ENCODE measurements at regions of chr3 and their contacts with region 1.

Region 1: DNA sequence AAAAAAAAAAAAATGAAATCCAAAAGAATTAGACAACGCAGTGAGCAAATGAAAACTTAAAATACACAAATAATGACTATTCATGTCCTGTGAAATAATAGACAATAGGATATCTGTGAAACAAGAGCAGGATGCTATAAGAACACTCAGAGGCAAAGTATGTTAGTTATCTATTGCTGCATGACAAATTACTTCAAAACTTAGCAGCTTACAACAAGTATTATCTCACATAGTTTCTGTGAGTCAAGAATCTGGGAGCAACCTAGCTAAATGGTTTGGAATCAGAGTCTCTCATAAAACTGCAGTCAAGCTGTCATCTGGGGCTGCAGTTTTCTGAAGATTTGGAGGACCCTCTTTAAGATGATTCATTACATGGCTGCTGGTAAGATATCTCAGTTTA is 36.5 kb upstream of the ZMAT3 start:
- DNase-seq: peak; percentile 76
- ATAC-seq: peak; percentile 91
- H3K4me3 ChIP-seq: no peak overlapping the region
- H3K27ac ChIP-seq: peak overlapping the region; percentile 35
- H3K4me1 ChIP-seq: peaks cover 14% of the 10 kb centered on the region
- H3K27me3 ChIP-seq: no peaks in the 10 kb centered on the region
- CTCF ChIP-seq: no peak

Region 2: DNA sequence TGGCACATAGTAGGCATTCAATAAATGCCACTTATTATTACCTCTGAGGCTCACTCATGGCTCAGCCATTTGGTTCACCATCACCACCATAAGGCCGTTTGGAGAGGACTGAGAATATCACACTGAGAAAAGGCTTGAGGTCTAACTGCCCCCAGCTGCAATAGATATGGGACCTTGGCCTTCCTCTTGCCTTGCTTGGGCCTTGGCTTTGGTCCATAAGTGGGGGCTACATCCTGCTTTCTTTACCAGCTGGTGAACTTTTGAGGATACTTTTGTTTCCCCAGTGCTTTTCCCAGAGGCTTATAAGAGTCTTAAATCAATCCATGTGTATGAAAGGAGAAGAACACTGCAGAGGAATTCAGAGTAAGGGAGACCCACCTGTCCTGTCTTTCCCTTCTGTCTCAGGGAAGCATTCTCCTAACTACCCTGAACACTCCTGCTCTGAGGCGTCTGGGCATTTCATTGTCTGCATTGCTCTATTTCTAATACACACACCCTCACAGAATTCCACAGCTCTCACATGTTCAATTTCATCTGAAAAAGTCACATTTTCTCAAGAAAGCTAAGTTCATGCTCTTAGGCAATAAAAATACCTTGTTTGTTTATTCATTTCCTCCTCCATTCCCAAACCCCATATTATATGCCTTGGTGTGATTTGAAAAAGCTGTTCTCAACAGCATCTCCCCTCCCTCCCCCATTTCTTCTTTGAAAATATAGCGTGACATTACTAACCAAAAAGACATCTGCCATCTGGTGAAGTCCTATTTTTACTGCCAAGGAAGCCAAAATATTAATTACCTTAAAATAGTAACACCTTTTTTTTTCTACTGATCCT is 594.3 kb before region 1 on chr3:
- CTCF ChIA-PET with region 1: no interaction called
- POLR2A ChIA-PET with region 1: no interaction called
- intact Hi-C with region 1: no loop called
- DNase-seq: no peak
- ATAC-seq: no peak
- H3K4me3 ChIP-seq: no peak overlapping the region
- H3K27ac ChIP-seq: no peak overlapping the region
- H3K4me1 ChIP-seq: no peaks in the 10 kb centered on the region
- H3K27me3 ChIP-seq: peaks cover 36% of the 10 kb centered on the region
- CTCF ChIP-seq: no peak

Region 3: DNA sequence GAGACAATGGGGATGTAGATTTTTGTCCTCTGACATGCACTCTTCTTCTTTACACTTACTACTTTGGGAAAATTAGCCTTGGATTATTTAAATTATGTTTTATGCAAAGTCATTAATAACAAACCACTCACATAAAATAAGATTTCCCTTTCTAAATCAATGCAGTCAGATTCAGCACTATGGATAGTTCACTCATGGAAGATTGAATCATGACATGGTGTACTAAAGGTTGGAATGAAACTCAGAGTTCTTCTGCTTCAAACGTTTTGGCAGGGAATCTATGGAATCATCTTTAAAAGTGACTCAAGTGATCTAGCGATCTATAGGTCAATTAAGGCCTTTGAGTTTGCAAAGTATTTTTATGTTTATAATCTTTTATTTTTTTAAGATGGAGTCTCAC is 417.5 kb before region 1 on chr3:
- CTCF ChIA-PET with region 1: no interaction called
- POLR2A ChIA-PET with region 1: no interaction called
- intact Hi-C with region 1: no loop called
- DNase-seq: no peak
- ATAC-seq: no peak
- H3K4me3 ChIP-seq: no peak overlapping the region
- H3K27ac ChIP-seq: no peak overlapping the region
- H3K4me1 ChIP-seq: no peaks in the 10 kb centered on the region
- H3K27me3 ChIP-seq: no peaks in the 10 kb centered on the region
- CTCF ChIP-seq: no peak

Region 4: GRCh38 chr3:179071550-179072397 is 36.3 kb before region 1 on chr3 and contains the start of gene ZMAT3:
- CTCF ChIA-PET with region 1: interaction called, 6 read pairs
- POLR2A ChIA-PET with region 1: no interaction called
- intact Hi-C with region 1: loop called (anchors 5 kb)
- DNase-seq: peak; percentile 83
- ATAC-seq: peak; percentile 91
- H3K4me3 ChIP-seq: peak within 1 kb of the TSS; percentile 82
- H3K27ac ChIP-seq: peak within 1 kb of the TSS; percentile 27
- H3K4me1 ChIP-seq: peaks cover 9% of the 10 kb centered on the region
- H3K27me3 ChIP-seq: no peaks in the 10 kb centered on the region
- CTCF ChIP-seq: no peak
- total RNA-seq, gene ZMAT3: 2.0 and 2.9 TPM in 2 replicates

Region 5: GRCh38 chr3:179133575-179133974 is 25.5 kb after region 1 on chr3:
- CTCF ChIA-PET with region 1: no interaction called
- POLR2A ChIA-PET with region 1: no interaction called
- intact Hi-C with region 1: loop called (anchors 1 kb)
- DNase-seq: no peak
- ATAC-seq: no peak
- H3K4me3 ChIP-seq: no peak overlapping the region
- H3K27ac ChIP-seq: no peak overlapping the region
- H3K4me1 ChIP-seq: no peaks in the 10 kb centered on the region
- H3K27me3 ChIP-seq: no peaks in the 10 kb centered on the region
- CTCF ChIP-seq: no peak

Region 6: DNA sequence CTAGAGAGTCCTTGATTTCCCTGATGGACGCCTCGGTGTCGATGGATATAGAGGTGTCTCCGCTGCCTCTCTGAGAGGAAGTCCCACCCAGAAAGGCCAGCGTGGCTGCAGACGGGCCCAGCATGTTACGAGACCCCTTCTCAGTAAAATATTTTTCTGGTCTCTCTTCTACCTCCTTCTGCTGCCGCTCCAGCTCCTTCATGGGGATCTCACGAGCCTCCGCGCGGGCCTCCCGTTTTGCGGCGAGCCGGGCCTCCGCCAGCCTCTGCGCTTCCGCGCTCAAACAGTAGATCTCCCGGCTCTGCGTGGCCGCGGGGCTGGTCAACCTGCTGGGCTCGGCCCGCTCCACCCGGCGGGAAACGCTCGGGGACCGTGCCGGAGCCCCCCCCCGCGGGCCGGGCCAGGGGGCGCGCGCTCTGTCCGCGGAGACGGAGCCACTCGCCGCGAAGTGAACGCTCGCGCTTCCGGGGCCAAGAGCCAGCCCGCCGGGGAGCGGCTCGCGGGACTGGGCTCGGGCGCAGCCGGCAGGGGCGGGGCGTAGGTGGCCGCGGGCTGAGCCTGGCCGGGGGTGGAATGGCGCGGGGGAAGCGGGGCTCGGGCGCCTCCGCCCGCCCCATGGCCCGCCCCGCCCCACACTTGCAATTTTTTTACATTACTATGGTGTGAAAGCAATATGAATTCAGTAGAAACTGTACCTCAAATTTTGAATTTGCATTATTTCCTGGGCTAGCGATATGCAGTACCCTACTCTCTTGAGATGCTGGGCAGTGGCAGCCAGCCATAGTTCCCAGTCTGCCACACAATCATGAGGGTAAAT is 153.1 kb after region 1 on chr3:
- CTCF ChIA-PET with region 1: no interaction called
- POLR2A ChIA-PET with region 1: no interaction called
- intact Hi-C with region 1: loop called (anchors 5 kb)
- DNase-seq: peak; percentile 77
- ATAC-seq: peak; percentile 97
- H3K4me3 ChIP-seq: peak overlapping the region; percentile 79
- H3K27ac ChIP-seq: no peak overlapping the region
- H3K4me1 ChIP-seq: peaks cover 11% of the 10 kb centered on the region
- H3K27me3 ChIP-seq: no peaks in the 10 kb centered on the region
- CTCF ChIP-seq: no peak

Region 7: DNA sequence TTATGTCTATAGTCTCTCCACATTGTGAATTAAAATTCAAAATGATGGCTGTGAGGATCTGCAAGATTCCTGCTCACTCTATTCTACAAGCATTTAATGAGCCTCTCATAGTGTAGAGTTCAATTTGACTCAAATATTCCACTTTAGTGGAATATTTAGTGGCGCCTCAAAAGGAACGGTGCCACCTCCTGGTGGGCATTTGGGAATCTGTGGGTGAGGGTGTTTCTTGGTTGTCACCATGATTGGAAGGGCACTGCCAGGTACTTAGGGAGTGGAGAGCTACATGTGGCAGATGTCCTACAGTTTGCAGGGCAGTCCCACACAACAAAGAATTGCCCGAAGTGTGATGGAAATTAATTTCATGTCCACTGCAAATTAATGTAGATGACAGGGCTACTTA is 164.3 kb after region 1 on chr3:
- CTCF ChIA-PET with region 1: no interaction called
- POLR2A ChIA-PET with region 1: no interaction called
- intact Hi-C with region 1: loop called (anchors 1 kb)
- DNase-seq: peak; percentile 46
- ATAC-seq: peak; percentile 68
- H3K4me3 ChIP-seq: no peak overlapping the region
- H3K27ac ChIP-seq: no peak overlapping the region
- H3K4me1 ChIP-seq: no peaks in the 10 kb centered on the region
- H3K27me3 ChIP-seq: no peaks in the 10 kb centered on the region
- CTCF ChIP-seq: peak; percentile 64

Measured in PC-3 (cell line).